ENCODE measurements at regions of chr18 and their contacts with region 1.

Region 1: DNA sequence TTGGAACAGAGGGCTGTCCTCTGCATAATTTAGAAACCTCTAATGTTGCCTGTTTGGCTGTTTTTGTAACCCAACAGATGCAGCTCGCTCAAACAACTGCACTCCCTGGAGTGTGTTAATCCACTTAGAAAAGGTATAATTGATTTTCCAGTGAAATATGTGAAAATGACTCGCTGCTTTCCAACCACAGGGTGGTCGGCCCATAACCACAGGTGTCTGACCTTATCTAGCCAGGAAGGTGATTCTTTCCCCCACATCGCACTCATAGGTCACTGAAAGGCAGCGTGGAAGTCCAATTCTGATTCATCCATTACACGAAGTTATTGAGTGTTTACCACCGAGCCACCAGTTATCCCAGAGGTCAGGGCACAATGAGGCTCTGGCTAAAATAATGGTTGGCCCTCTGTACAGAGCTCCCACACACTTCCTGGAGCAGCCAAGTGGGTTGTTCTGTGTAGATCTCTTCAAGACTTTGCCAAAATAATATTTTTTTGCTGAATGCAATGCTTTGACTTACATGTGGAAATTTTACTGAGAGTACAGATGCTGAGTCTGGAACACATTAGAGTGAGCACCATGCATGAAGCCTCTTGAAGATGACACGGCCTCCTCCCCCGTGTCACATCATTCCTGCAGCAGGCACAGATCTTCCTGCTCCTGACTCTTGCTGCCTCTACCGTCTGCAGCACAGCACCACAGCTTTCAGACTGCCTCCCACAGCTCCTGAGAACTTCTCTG is 396.2 kb downstream of the ZNF516 start:
- DNase-seq: no peak
- H3K4me3 ChIP-seq: no peak overlapping the region
- H3K4me3 Mint-ChIP-seq: no peak overlapping the region
- H3K27ac Mint-ChIP-seq: no peak overlapping the region
- H3K4me1 ChIP-seq: no peaks in the 10 kb centered on the region
- H3K4me1 Mint-ChIP-seq: no peaks in the 10 kb centered on the region
- H3K27me3 ChIP-seq: no peaks in the 10 kb centered on the region
- H3K27me3 Mint-ChIP-seq: peaks cover 3% of the 10 kb centered on the region
- CTCF ChIP-seq: no peak

Region 2: GRCh38 chr18:76113101-76113500 is 14.3 kb after region 1 on chr18:
- CTCF ChIA-PET with region 1: no interaction called
- POLR2A ChIA-PET with region 1: no interaction called
- intact Hi-C with region 1: loop called (anchors 1 kb)
- DNase-seq: no peak
- H3K4me3 ChIP-seq: no peak overlapping the region
- H3K4me3 Mint-ChIP-seq: no peak overlapping the region
- H3K27ac Mint-ChIP-seq: no peak overlapping the region
- H3K4me1 ChIP-seq: no peaks in the 10 kb centered on the region
- H3K4me1 Mint-ChIP-seq: no peaks in the 10 kb centered on the region
- H3K27me3 ChIP-seq: no peaks in the 10 kb centered on the region
- H3K27me3 Mint-ChIP-seq: no peaks in the 10 kb centered on the region
- CTCF ChIP-seq: no peak